ENCODE measurements at regions of chr12 and their contacts with region 1.

Region 1: DNA sequence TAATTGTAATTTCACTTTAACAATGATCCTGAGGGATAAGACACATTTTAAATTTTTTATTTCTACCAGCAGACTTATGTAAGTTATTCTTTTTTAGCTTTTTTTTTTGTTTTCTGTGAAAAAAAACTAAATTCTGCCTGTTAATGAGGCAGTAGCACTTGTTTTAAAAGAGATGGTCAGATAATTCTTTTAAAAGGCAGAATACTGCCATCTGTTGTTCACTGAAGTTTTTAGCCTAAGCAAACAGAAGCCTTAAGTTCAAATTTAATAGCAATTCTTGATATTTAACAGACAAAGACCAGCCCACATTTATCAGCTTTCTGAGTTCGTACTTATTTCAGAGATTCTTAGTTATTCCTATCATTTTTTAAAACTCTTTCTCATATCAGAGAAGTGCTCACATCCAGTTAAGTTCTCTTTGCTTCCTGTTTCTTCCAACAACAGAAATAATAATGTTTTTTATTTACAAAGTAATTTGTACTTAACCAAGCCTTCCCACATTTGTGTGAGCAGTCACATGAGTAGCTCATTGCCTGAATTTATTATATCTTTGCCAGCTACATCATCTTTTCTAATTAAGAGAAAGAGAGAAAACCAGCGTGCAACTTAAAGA is 93.4 kb upstream of the SLCO1C1 start:
- DNase-seq: peak; percentile 22
- H3K4me3 ChIP-seq: no peak overlapping the region
- H3K27ac ChIP-seq: peak overlapping the region; percentile 47 to 97; a peak in 3 of 4 replicates
- H3K4me1 ChIP-seq: peaks cover 7 to 10% of the 10 kb centered on the region in 2 experiments; a peak in 3 of 4 replicates
- H3K27me3 ChIP-seq: no peaks in the 10 kb centered on the region
- CTCF ChIP-seq: peak; percentile 74
- EP300 ChIP-seq: no peak
- RAD21 ChIP-seq: peak; percentile 79

Region 2: GRCh38 chr12:19915392-19916195 is 686.2 kb before region 1 on chr12:
- CTCF ChIA-PET with region 1: interaction called, 21 read pairs
- POLR2A ChIA-PET with region 1: no interaction called
- DNase-seq: peak; percentile 27
- H3K4me3 ChIP-seq: no peak overlapping the region; a peak in 1 of 4 replicates
- H3K27ac ChIP-seq: peak overlapping the region in 1 of 2 experiments; percentile 69; a peak in 2 of 4 replicates
- H3K4me1 ChIP-seq: peaks cover 0 to 10% of the 10 kb centered on the region in 2 experiments; a peak in 2 of 4 replicates
- H3K27me3 ChIP-seq: no peaks in the 10 kb centered on the region
- CTCF ChIP-seq: peak; percentile 84
- EP300 ChIP-seq: no peak
- RAD21 ChIP-seq: peak; percentile 92

Region 3: GRCh38 chr12:20154060-20154459 is 447.7 kb before region 1 on chr12:
- CTCF ChIA-PET with region 1: no interaction called
- POLR2A ChIA-PET with region 1: no interaction called
- DNase-seq: no peak
- H3K4me3 ChIP-seq: no peak overlapping the region
- H3K27ac ChIP-seq: no peak overlapping the region
- H3K4me1 ChIP-seq: peaks cover 0 to 5% of the 10 kb centered on the region in 2 experiments; a peak in 1 of 4 replicates
- H3K27me3 ChIP-seq: no peaks in the 10 kb centered on the region
- CTCF ChIP-seq: no peak
- EP300 ChIP-seq: no peak
- RAD21 ChIP-seq: no peak

Region 4: GRCh38 chr12:20463913-20464524 is 137.8 kb before region 1 on chr12:
- CTCF ChIA-PET with region 1: interaction called, 14 read pairs
- POLR2A ChIA-PET with region 1: no interaction called
- DNase-seq: peak; percentile 10
- H3K4me3 ChIP-seq: no peak overlapping the region
- H3K27ac ChIP-seq: no peak overlapping the region
- H3K4me1 ChIP-seq: peaks cover 9 to 13% of the 10 kb centered on the region in 2 experiments; a peak in 3 of 4 replicates
- H3K27me3 ChIP-seq: no peaks in the 10 kb centered on the region
- CTCF ChIP-seq: peak; percentile 86
- EP300 ChIP-seq: no peak
- RAD21 ChIP-seq: peak; percentile 70

Region 5: DNA sequence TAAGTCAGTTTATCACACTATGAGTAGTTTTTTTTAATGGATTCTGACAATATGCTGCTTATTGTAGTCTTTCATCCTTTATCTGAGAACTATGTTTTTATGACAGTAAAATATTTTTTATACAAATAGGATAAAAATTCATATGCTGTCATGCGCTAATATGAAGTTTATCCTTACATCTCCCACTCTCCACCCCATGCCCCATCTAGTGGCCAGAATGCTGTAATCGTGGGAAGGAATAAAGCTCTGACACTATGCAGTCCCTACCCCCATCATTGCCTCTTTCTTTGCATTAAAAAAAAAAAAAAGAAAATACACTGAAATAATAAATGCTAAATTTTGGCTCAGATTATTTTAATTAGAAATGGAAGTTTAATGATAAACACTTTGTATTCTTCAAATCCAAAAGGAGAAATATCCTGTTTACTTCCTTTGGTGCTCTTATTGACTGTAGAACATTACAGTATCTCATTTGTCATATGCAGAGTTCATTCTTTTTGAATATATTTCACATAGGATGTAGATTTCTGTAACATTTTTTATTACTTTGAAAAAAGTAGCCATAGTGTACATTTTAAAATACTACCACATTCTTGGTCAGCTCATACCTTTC is 52.6 kb before region 1 on chr12:
- CTCF ChIA-PET with region 1: interaction called, 11 read pairs
- POLR2A ChIA-PET with region 1: no interaction called
- DNase-seq: peak; percentile 75
- H3K4me3 ChIP-seq: peak overlapping the region in 1 of 2 experiments; percentile 21; a peak in 1 of 4 replicates
- H3K27ac ChIP-seq: peak overlapping the region; percentile 78 to 85
- H3K4me1 ChIP-seq: peaks cover 15 to 26% of the 10 kb centered on the region in 2 experiments; a peak in 3 of 4 replicates
- H3K27me3 ChIP-seq: no peaks in the 10 kb centered on the region
- CTCF ChIP-seq: peak; percentile 84
- EP300 ChIP-seq: no peak; a peak in 1 of 4 replicates
- RAD21 ChIP-seq: peak; percentile 71

Region 6: GRCh38 chr12:20624718-20625117 is 22.9 kb after region 1 on chr12:
- CTCF ChIA-PET with region 1: interaction called, 13 read pairs
- POLR2A ChIA-PET with region 1: no interaction called
- DNase-seq: peak; percentile 19
- H3K4me3 ChIP-seq: no peak overlapping the region
- H3K27ac ChIP-seq: no peak overlapping the region
- H3K4me1 ChIP-seq: peaks cover 4 to 5% of the 10 kb centered on the region in 2 experiments; a peak in 3 of 4 replicates
- H3K27me3 ChIP-seq: no peaks in the 10 kb centered on the region
- CTCF ChIP-seq: peak; percentile 60
- EP300 ChIP-seq: no peak
- RAD21 ChIP-seq: peak; percentile 64